Activated CD8-positive, alpha-beta memory T cell treated with anti-CD3 and anti-CD28 coated beads, Interleukin-2, amount 10 ng/mL, durations not matched to agents 7 days and 5 days (primary cell): ENCODE measurements at regions of chr10 and their contacts with region 1.

Region 1: GRCh38 chr10:77173615-77174461 is 463.8 kb downstream of the KCNMA1 start:
- DNase-seq: peak; percentile 71
- ATAC-seq: peak; percentile 23
- H3K4me3 Mint-ChIP-seq: no peak overlapping the region
- H3K27ac Mint-ChIP-seq: no peak overlapping the region
- H3K4me1 Mint-ChIP-seq: no peaks in the 10 kb centered on the region
- H3K27me3 Mint-ChIP-seq: peaks cover 6% of the 10 kb centered on the region

Region 2: GRCh38 chr10:77524281-77524711 is 350.5 kb after region 1 on chr10:
- CTCF ChIA-PET with region 1: no interaction called
- DNase-seq: no peak
- ATAC-seq: no peak
- H3K4me3 Mint-ChIP-seq: no peak overlapping the region
- H3K27ac Mint-ChIP-seq: no peak overlapping the region
- H3K4me1 Mint-ChIP-seq: no peaks in the 10 kb centered on the region
- H3K27me3 Mint-ChIP-seq: peaks cover 12% of the 10 kb centered on the region

Region 3: GRCh38 chr10:77641788-77642397 is 468.1 kb after region 1 on chr10:
- CTCF ChIA-PET with region 1: interaction called, 41 read pairs
- DNase-seq: peak; percentile 59
- ATAC-seq: no peak
- H3K4me3 Mint-ChIP-seq: no peak overlapping the region
- H3K27ac Mint-ChIP-seq: no peak overlapping the region
- H3K4me1 Mint-ChIP-seq: peaks cover 5% of the 10 kb centered on the region
- H3K27me3 Mint-ChIP-seq: peaks cover 45% of the 10 kb centered on the region

Region 4: GRCh38 chr10:77647543-77648293 is 473.9 kb after region 1 on chr10:
- CTCF ChIA-PET with region 1: interaction called, 41 read pairs
- DNase-seq: no peak
- ATAC-seq: no peak
- H3K4me3 Mint-ChIP-seq: no peak overlapping the region
- H3K27ac Mint-ChIP-seq: no peak overlapping the region
- H3K4me1 Mint-ChIP-seq: no peaks in the 10 kb centered on the region
- H3K27me3 Mint-ChIP-seq: peaks cover 23% of the 10 kb centered on the region